Posterior cingulate gyrus (tissue), 11 donors: ENCODE measurements at regions of chr1 and their contacts with region 1.

Region 1: GRCh38 chr1:234722904-234723720 is 113.1 kb upstream of the IRF2BP2 start:
- DNase-seq: peak in 8 of 10 donors; percentile 45 to 89 (median 59)

Region 2: GRCh38 chr1:234499119-234499942 is 223.8 kb before region 1 on chr1:
- intact Hi-C with region 1: loop called (anchors 2 kb)
- DNase-seq: peak; percentile 86 to 98 (median 94)

Region 3: DNA sequence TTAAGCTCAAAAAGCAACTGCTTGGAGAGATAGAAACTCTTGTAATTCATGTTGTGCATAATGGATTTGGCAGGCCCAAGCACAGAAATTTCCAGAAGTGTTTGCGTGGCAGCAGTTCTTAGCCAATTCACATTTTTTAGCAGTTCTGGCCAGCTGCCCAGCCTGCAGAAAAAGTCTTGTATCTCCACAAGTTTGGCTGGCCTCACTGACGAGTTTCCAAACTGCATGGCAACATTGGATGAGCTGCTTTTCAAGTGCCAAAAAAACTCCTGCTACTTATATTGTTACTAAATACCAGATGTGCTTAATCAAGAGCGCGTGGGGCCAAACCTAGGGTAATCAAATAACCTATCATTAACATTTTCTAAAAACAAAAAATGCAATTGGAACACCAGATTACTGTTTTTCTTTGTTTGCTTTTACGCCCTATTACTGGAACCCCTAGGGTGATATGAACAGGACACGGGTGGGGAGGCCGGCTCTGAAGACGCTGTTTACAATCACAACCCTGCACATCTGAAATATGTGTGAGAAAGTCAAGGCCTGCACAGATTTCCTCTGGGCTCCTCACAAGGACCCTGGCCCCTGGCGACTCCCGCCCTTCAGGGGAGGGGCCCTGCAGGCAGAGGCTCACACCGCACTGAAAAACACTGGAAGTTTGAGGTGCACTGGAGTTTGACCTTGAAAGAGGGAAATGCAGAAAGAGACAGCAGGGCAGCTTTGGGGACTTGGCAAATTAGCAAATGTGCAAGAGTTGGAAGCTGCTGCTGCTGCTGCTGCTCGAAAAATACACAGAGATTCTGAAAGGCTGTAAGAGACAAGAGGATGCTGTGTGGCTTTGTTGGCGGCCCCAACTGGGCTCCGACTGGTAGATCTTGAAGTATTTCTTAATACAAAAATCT is 188.9 kb before region 1 on chr1:
- intact Hi-C with region 1: loop called (anchors 10 kb)
- DNase-seq: peak; percentile 69 to 95 (median 82)

Region 4: GRCh38 chr1:234610348-234611152 is 112.6 kb before region 1 on chr1:
- intact Hi-C with region 1: loop called (anchors 1 kb)
- DNase-seq: peak; percentile 88 to 99 (median 92)

Region 5: DNA sequence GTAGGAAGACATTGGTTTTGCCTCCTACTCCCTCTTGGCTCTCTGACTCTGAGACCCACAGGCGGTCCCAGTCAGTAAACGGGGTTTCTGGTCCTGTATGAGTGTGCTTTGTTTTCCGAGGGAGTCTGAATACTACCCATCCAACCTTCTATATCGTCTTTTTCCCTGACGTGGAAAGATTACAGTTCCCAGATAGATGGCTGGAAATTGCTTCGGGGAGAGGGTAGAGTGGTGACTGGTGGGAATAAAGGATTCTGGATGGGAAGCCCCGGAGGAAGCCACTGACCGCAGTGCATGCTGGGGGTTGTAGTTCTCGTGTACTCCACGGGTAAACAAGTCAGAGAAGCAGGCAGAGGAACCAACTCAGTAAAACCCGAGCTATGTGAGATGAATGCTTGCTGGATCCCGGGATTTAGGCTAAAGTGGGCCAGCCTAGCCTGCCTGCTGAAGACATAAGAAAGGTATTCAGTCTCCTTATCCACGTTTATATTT is 47.0 kb before region 1 on chr1:
- intact Hi-C with region 1: loop called (anchors 2 kb)
- DNase-seq: peak; percentile 82 to 98 (median 93)

Region 6: DNA sequence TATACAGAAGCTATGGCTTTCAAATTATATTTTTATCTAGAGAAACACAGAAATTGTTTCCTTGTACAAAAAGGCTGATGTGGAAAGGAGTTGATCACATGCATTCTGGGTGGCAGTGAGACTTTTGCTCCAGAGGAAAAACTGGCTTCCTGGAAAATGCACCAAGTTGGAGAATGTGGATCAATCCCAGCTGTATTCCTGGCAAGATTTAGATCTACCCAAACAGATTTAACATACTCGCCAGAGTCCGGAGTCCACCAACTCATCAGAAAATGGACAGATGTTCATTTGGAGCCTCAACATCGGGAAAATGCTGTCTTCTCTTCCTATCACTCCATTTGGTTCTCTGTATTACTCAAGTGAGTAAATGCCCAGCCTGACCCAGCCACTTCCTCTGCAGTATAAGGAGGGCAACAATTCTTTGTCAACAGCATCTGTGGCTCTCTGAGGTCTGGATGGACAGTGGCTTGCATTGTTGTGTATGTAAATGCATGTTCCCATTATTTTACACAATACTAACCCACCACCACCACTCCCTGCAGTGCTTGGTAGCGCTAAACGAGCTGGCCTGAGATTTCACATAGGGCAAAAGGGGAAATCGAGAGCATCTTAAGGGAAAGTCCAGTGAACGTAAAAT is 113.1 kb after region 1 on chr1:
- intact Hi-C with region 1: loop called (anchors 1 kb)
- DNase-seq: peak in 6 of 10 donors; percentile 22 to 90 (median 48)

Region 7: GRCh38 chr1:234978397-234979295 is 255.5 kb after region 1 on chr1:
- intact Hi-C with region 1: loop called (anchors 10 kb)
- DNase-seq: peak in 9 of 10 donors; percentile 55 to 95 (median 75)